ENCODE measurements at regions of chr6 and their contacts with region 1.

Region 1: GRCh38 chr6:53410508-53411258 is 61.9 kb upstream of the ELOVL5 start:
- DNase-seq: peak; percentile 22 to 75 (median 56)
- ATAC-seq: peak; percentile 99
- H3K4me3 ChIP-seq: no peak overlapping the region
- H3K4me3 Mint-ChIP-seq: no peak overlapping the region
- H3K27ac ChIP-seq: no peak overlapping the region
- H3K27ac Mint-ChIP-seq: no peak overlapping the region
- H3K4me1 ChIP-seq: no peaks in the 10 kb centered on the region
- H3K4me1 Mint-ChIP-seq: peaks cover 4% of the 10 kb centered on the region
- H3K27me3 ChIP-seq: peaks cover 0 to 3% of the 10 kb centered on the region in 2 experiments
- H3K27me3 Mint-ChIP-seq: no peaks in the 10 kb centered on the region
- CTCF ChIP-seq: peak; percentile 85

Region 2: DNA sequence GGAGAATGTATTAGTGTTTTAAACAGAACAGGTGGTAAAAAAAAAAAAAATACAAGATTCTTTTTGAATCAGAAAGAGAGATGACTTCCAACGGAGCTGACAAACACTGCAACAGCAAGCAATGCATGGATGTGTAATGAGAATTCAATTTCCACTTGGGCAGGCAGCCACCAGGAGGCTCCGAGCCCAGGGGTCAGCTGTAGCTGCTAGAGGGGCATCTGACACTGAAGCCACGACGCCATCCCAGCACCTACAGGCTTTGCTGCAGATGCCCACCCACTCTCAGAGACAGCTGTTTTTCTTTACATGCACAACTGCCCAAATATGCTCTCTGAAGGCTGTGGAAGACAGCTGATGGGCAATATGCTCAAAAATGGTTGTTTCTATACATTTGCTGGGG is 137.3 kb before region 1 on chr6:
- CTCF ChIA-PET with region 1: interaction called, 9 read pairs
- POLR2A ChIA-PET with region 1: no interaction called
- intact Hi-C with region 1: loop called (anchors 5 kb)
- DNase-seq: no peak
- ATAC-seq: no peak
- H3K4me3 ChIP-seq: no peak overlapping the region
- H3K4me3 Mint-ChIP-seq: no peak overlapping the region
- H3K27ac ChIP-seq: no peak overlapping the region
- H3K27ac Mint-ChIP-seq: no peak overlapping the region
- H3K4me1 ChIP-seq: no peaks in the 10 kb centered on the region
- H3K4me1 Mint-ChIP-seq: peaks cover 3% of the 10 kb centered on the region
- H3K27me3 ChIP-seq: no peaks in the 10 kb centered on the region
- H3K27me3 Mint-ChIP-seq: no peaks in the 10 kb centered on the region
- CTCF ChIP-seq: no peak

Region 3: GRCh38 chr6:53359072-53359842 is 51.4 kb before region 1 on chr6:
- CTCF ChIA-PET with region 1: interaction called, 3 read pairs
- POLR2A ChIA-PET with region 1: no interaction called
- intact Hi-C with region 1: loop called in 1 of 2 experiments (anchors 5 kb)
- DNase-seq: peak; percentile 79 to 95 (median 86)
- ATAC-seq: peak; percentile 76
- H3K4me3 ChIP-seq: peak overlapping the region; percentile 67 to 72
- H3K4me3 Mint-ChIP-seq: peak overlapping the region; percentile 88
- H3K27ac ChIP-seq: peak overlapping the region; percentile 83 to 96
- H3K27ac Mint-ChIP-seq: peak overlapping the region; percentile 96
- H3K4me1 ChIP-seq: peaks cover 38% of the 10 kb centered on the region
- H3K4me1 Mint-ChIP-seq: peaks cover 43% of the 10 kb centered on the region
- H3K27me3 ChIP-seq: no peaks in the 10 kb centered on the region
- H3K27me3 Mint-ChIP-seq: no peaks in the 10 kb centered on the region
- CTCF ChIP-seq: no peak

Region 4: GRCh38 chr6:53398247-53399026 is 12.2 kb before region 1 on chr6:
- CTCF ChIA-PET with region 1: interaction called, 12 read pairs
- POLR2A ChIA-PET with region 1: no interaction called
- intact Hi-C with region 1: no loop called
- DNase-seq: no peak
- ATAC-seq: no peak
- H3K4me3 ChIP-seq: no peak overlapping the region
- H3K4me3 Mint-ChIP-seq: no peak overlapping the region
- H3K27ac ChIP-seq: no peak overlapping the region
- H3K27ac Mint-ChIP-seq: no peak overlapping the region
- H3K4me1 ChIP-seq: no peaks in the 10 kb centered on the region
- H3K4me1 Mint-ChIP-seq: no peaks in the 10 kb centered on the region
- H3K27me3 ChIP-seq: no peaks in the 10 kb centered on the region
- H3K27me3 Mint-ChIP-seq: peaks cover 2% of the 10 kb centered on the region
- CTCF ChIP-seq: no peak

Region 5: DNA sequence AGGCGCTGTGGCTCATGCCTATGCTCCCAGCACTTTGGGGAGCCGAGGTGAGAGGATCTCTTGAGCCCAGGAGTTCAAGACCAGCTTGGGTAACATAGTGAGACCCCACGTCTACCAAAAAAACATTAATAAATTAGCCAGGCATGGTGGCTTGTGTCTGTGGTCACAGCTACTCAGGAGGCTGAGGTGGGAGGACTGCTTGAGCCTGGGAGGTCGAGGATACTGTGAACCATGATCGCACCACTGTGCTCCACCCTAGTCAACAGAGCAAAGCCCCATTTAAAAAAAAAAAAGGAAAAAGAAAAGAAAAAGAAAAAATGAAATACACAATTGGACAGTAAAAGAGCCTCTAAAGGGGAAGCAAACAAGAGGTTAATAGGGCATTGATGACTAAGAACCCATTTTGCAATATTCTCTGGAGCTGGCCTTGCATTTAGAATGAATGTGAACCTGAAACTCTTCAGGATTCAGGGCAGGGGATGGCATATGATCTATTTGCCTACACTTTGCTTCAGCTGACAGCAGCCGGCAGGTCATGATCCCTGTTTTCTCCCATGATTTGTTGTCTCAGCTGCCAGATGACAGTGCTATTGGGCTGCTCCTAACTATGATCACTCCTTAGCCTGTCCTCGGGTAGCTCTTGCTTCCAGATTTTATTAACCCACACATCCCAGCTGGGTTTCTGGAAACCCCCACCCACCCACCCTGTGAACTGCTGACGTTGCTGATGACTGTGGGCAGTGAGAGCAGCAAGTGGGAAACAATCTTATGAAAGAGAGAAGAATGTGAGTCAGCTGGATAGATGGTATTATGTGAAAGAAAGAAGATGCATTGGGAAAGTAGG is 21.9 kb after region 1 on chr6:
- CTCF ChIA-PET with region 1: interaction called, 15 read pairs
- POLR2A ChIA-PET with region 1: no interaction called
- intact Hi-C with region 1: no loop called
- DNase-seq: peak in 1 of 9 experiments; percentile 10
- ATAC-seq: no peak
- H3K4me3 ChIP-seq: no peak overlapping the region
- H3K4me3 Mint-ChIP-seq: no peak overlapping the region
- H3K27ac ChIP-seq: no peak overlapping the region
- H3K27ac Mint-ChIP-seq: no peak overlapping the region
- H3K4me1 ChIP-seq: no peaks in the 10 kb centered on the region
- H3K4me1 Mint-ChIP-seq: peaks cover 13% of the 10 kb centered on the region
- H3K27me3 ChIP-seq: no peaks in the 10 kb centered on the region
- H3K27me3 Mint-ChIP-seq: no peaks in the 10 kb centered on the region
- CTCF ChIP-seq: no peak

Region 6: DNA sequence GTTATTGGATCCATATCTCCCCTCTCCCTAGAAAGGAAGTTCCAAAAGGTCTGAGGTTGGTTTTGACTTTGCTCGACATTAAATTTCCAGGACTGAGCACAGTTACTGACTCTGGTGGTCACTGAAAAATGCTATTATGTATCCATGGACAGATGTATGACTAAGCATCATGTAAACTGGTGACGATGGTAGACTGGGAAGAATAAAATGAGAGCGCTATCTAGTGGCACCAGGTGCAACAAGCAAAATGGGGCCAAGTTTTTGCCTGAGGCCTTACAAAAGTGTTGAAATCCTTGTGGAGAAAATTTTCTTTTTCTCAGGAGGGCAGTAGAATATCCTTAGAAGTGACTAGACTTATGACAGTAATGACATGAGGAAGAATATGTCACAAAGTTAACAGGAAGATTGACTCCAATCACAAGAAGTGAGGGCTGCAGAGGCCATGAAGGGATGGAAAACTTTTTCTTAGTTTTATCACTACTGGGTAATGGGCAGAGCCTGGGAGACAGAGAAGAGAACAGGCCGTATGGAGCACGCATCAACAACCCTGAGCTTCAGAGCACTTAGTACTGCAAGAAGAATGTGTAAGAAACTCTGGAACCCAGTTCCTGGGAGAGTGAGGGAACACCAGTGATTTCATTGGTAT is 27.0 kb after region 1 on chr6:
- CTCF ChIA-PET with region 1: interaction called, 11 read pairs
- POLR2A ChIA-PET with region 1: no interaction called
- intact Hi-C with region 1: no loop called
- DNase-seq: peak in 4 of 9 experiments; percentile 4 to 56 (median 28)
- ATAC-seq: no peak
- H3K4me3 ChIP-seq: no peak overlapping the region
- H3K4me3 Mint-ChIP-seq: no peak overlapping the region
- H3K27ac ChIP-seq: no peak overlapping the region
- H3K27ac Mint-ChIP-seq: no peak overlapping the region
- H3K4me1 ChIP-seq: no peaks in the 10 kb centered on the region
- H3K4me1 Mint-ChIP-seq: no peaks in the 10 kb centered on the region
- H3K27me3 ChIP-seq: no peaks in the 10 kb centered on the region
- H3K27me3 Mint-ChIP-seq: peaks cover 4% of the 10 kb centered on the region
- CTCF ChIP-seq: peak; percentile 51

Region 7: GRCh38 chr6:53484476-53485280 is 74.0 kb after region 1 on chr6:
- CTCF ChIA-PET with region 1: interaction called, 27 read pairs
- POLR2A ChIA-PET with region 1: no interaction called
- intact Hi-C with region 1: loop called (anchors 1 kb)
- DNase-seq: peak; percentile 42 to 80 (median 74)
- ATAC-seq: peak; percentile 79
- H3K4me3 ChIP-seq: no peak overlapping the region
- H3K4me3 Mint-ChIP-seq: no peak overlapping the region
- H3K27ac ChIP-seq: no peak overlapping the region
- H3K27ac Mint-ChIP-seq: no peak overlapping the region
- H3K4me1 ChIP-seq: no peaks in the 10 kb centered on the region
- H3K4me1 Mint-ChIP-seq: peaks cover 10% of the 10 kb centered on the region
- H3K27me3 ChIP-seq: peaks cover 0 to 4% of the 10 kb centered on the region in 2 experiments
- H3K27me3 Mint-ChIP-seq: peaks cover 33% of the 10 kb centered on the region
- CTCF ChIP-seq: peak; percentile 98

Region 8: GRCh38 chr6:53846250-53846649 is 435.6 kb after region 1 on chr6:
- CTCF ChIA-PET with region 1: no interaction called
- POLR2A ChIA-PET with region 1: no interaction called
- intact Hi-C with region 1: no loop called
- DNase-seq: no peak
- ATAC-seq: no peak
- H3K4me3 ChIP-seq: no peak overlapping the region
- H3K4me3 Mint-ChIP-seq: no peak overlapping the region
- H3K27ac ChIP-seq: no peak overlapping the region
- H3K27ac Mint-ChIP-seq: no peak overlapping the region
- H3K4me1 ChIP-seq: no peaks in the 10 kb centered on the region
- H3K4me1 Mint-ChIP-seq: no peaks in the 10 kb centered on the region
- H3K27me3 ChIP-seq: no peaks in the 10 kb centered on the region
- H3K27me3 Mint-ChIP-seq: no peaks in the 10 kb centered on the region
- CTCF ChIP-seq: no peak

Measured in CD8-positive, alpha-beta T cell (primary cell).